Caco-2 (cell line): ENCODE measurements at regions of chr10 and their contacts with region 1.

Region 1: DNA sequence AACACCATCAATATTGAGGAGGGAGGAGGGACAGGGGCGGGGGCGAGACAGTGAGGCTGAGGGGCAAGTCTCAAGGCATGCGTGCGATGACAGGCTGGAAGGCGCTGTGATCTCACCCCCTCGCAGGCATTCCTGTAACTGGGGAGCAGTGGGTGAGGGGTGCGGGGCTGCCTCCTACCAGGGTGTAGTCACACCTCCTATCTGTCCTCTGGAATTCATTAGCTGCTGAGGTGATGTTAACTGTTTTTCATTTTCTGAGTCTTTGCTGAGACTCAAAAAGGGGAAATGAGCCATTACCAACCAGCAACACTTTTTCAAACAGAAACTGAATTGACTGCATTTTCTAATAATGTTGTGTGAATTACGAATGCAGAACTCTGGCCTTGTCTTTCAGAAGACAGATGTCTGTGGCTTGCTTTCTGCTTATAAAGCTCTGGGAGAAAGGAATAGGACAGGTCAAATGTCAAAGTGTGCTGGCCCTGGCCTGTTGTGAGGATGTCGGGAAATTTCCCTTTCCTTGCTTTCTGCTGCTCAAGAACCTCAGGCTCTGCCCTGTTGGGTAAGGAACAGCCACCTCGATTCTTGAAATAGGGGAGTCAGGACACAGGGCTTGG is 23.7 kb upstream of the CDH23 start:
- DNase-seq: no peak
- H3K4me3 ChIP-seq: no peak overlapping the region
- H3K4me3 Mint-ChIP-seq: no peak overlapping the region
- H3K27ac Mint-ChIP-seq: no peak overlapping the region
- H3K4me1 ChIP-seq: peaks cover 12% of the 10 kb centered on the region; the same call in 1 of the 2 replicates
- H3K4me1 Mint-ChIP-seq: peaks cover 14% of the 10 kb centered on the region
- H3K27me3 ChIP-seq: no peaks in the 10 kb centered on the region
- H3K27me3 Mint-ChIP-seq: peaks cover 3% of the 10 kb centered on the region
- CTCF ChIP-seq: no peak

Region 2: DNA sequence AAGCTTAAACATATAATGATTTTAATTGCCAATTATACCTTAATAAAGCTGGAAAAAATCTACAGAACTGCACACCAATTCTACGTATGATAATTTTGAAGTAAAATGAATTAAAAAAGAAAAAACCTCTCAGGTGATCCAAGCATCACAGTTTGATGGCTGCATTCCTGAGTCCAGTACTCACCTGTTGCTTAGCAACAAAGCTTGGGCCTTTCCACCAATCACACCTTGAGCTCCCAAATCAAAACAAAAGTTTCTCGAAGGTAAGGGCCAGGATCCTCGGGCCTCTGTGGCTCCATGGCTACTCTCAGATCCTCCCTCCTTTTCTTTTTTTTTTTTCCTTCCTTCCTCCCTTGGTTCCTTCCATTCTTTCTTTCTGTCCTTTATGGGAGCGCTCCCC is 347.5 kb before region 1 on chr10:
- CTCF ChIA-PET with region 1: no interaction called
- POLR2A ChIA-PET with region 1: no interaction called
- intact Hi-C with region 1: no loop called
- DNase-seq: peak in 1 of 2 experiments; percentile 39
- H3K4me3 ChIP-seq: no peak overlapping the region
- H3K4me3 Mint-ChIP-seq: no peak overlapping the region
- H3K27ac Mint-ChIP-seq: no peak overlapping the region
- H3K4me1 ChIP-seq: no peaks in the 10 kb centered on the region
- H3K4me1 Mint-ChIP-seq: peaks cover 5% of the 10 kb centered on the region
- H3K27me3 ChIP-seq: no peaks in the 10 kb centered on the region
- H3K27me3 Mint-ChIP-seq: peaks cover 11% of the 10 kb centered on the region
- CTCF ChIP-seq: no peak

Region 3: GRCh38 chr10:71343392-71343773 is 29.6 kb before region 1 on chr10:
- CTCF ChIA-PET with region 1: interaction called, 4 read pairs
- POLR2A ChIA-PET with region 1: interaction called, 11 read pairs
- intact Hi-C with region 1: loop called (anchors 1 kb)
- DNase-seq: peak; percentile 66 to 77
- H3K4me3 ChIP-seq: no peak overlapping the region
- H3K4me3 Mint-ChIP-seq: no peak overlapping the region
- H3K27ac Mint-ChIP-seq: peak overlapping the region; percentile 93
- H3K4me1 ChIP-seq: peaks cover 83% of the 10 kb centered on the region
- H3K4me1 Mint-ChIP-seq: peaks cover 73% of the 10 kb centered on the region
- H3K27me3 ChIP-seq: no peaks in the 10 kb centered on the region
- H3K27me3 Mint-ChIP-seq: no peaks in the 10 kb centered on the region
- CTCF ChIP-seq: no peak

Region 4: DNA sequence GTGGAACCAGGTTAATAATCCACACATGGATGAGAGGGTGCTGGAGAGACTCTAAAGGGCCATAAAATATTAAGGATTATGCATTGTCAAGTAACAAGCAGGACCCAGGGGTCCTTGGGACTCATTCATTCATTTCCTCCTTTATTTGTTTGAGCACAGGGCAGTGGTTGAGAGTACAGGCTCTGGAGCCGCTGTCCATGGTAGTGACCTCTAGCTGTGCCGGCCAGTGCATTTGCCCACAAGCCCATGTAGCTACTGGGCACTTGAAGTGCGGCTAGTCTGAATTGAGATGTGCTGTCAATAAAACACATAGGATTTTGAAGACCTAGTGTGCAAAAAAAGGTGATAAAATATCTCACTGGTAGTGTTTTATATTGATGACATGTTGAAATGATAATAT is 209.0 kb after region 1 on chr10:
- CTCF ChIA-PET with region 1: no interaction called
- POLR2A ChIA-PET with region 1: no interaction called
- intact Hi-C with region 1: no loop called
- DNase-seq: peak in 1 of 2 experiments; percentile 62
- H3K4me3 ChIP-seq: no peak overlapping the region
- H3K4me3 Mint-ChIP-seq: no peak overlapping the region
- H3K27ac Mint-ChIP-seq: no peak overlapping the region
- H3K4me1 ChIP-seq: no peaks in the 10 kb centered on the region
- H3K4me1 Mint-ChIP-seq: no peaks in the 10 kb centered on the region
- H3K27me3 ChIP-seq: no peaks in the 10 kb centered on the region
- H3K27me3 Mint-ChIP-seq: peaks cover 6% of the 10 kb centered on the region
- CTCF ChIP-seq: no peak